ENCODE measurements at regions of chr4 and their contacts with region 1.

Region 1: GRCh38 chr4:173420324-173420752 is 21.4 kb upstream of the SCRG1 start:
- DNase-seq: no peak
- H3K4me3 ChIP-seq: no peak overlapping the region
- CTCF ChIP-seq: peak; percentile 12

Region 2: DNA sequence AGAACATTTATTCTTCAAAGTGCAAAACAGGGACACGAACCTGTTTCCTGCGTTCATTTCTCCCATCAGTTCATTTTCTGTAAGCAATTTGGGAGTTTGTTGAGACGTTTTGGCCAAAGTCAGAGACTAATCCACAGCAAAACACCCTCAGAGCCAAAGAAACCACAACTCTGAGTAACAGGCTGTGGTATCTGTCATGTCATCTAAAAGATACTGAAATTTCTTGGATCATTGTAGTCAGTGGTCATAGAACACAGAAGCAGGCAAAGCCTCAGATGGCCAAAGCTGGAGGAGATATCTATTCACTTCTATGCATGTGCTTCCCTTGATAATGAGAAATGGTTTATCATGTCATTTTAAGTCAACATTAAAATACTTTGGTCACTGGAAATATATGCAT is 737.3 kb before region 1 on chr4:
- CTCF ChIA-PET with region 1: no interaction called
- POLR2A ChIA-PET with region 1: no interaction called
- DNase-seq: peak; percentile 7
- H3K4me3 ChIP-seq: no peak overlapping the region
- CTCF ChIP-seq: no peak

Region 3: DNA sequence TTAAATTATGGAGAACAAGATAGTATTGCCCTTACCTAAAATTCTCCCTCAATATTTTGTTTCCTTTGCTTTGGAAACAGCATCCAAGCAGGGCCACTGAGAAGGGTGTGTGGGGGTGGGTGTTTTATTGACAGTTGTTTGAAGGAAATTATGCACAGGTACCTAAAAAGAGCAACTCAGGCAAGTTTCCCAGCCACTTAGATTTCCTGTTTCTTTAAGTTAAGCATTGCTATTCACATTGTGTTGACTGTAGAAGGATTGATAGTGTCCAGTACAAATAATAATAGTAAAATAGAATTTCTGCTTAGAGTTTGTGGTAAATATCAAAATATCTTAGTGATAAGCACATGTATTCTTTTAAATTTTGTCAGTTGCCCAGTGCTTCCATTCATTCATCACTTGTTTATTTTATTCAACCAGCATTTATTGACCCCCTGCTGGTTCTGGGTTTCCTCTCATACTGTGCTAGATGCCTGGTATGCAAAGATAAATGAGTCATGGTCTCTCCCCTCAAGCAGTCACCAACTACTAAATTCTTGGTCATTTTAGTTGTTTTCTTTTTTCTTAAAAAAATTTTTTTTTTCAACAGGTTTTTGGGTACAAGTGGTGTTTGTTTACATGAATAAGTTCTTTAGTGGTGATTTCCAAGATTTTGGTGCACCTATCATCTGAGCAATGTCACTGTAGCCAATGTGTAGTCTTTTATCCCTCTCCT is 201.8 kb before region 1 on chr4:
- CTCF ChIA-PET with region 1: no interaction called
- POLR2A ChIA-PET with region 1: no interaction called
- DNase-seq: peak; percentile 34
- H3K4me3 ChIP-seq: no peak overlapping the region
- CTCF ChIP-seq: no peak

Region 4: GRCh38 chr4:173307778-173308177 is 112.6 kb before region 1 on chr4:
- CTCF ChIA-PET with region 1: interaction called, 38 read pairs
- POLR2A ChIA-PET with region 1: no interaction called
- DNase-seq: no peak
- H3K4me3 ChIP-seq: no peak overlapping the region
- CTCF ChIP-seq: no peak

Region 5: DNA sequence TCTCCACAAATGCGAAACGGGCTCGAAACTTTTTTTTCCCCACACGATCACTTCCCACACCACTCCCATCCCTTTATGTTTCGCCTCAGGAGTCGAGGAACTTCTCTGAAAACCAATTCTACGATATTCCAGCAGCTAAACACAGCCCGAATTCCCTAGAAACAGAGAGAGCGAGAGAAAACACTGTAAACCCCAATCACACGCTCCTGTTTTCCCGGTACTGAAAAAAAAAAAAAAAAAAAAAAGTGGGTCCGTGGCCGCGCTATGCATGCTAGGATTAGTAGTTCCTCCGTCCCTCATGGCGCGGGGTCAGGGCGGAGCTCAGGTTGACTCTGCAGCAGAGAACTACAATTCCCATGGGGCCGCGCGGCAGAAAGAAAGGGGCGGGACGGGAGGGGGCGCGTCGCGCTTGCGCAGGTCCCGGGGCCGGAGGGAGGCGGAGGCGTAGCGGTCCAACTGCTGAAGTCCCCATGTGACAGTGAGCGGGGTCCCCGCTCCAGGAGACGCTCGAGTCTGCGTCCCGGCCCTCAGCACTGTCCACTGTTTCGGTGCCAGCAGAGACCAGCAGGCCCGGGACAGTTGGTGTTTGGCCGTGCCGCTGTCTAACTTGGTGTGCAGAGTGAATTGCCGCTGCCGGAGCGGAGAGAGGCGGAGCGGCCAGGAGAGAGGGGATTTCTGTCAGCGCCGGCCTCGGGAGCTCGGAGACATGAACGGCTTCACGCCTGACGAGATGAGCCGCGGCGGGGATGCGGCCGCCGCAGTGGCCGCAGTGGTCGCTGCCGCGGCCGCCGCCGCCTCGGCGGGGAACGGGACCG is 49.7 kb before region 1 on chr4 and contains the start of gene SAP30:
- CTCF ChIA-PET with region 1: interaction called, 11 read pairs
- POLR2A ChIA-PET with region 1: interaction called, 3 read pairs
- DNase-seq: peak; percentile 91
- H3K4me3 ChIP-seq: peak within 1 kb of the TSS; percentile 89
- CTCF ChIP-seq: no peak

Region 6: GRCh38 chr4:173405840-173406606 is 14.3 kb before region 1 on chr4:
- CTCF ChIA-PET with region 1: interaction called, 42 read pairs
- POLR2A ChIA-PET with region 1: no interaction called
- DNase-seq: no peak
- H3K4me3 ChIP-seq: no peak overlapping the region
- CTCF ChIP-seq: no peak

Region 7: GRCh38 chr4:173494013-173494970 is 74.0 kb after region 1 on chr4:
- CTCF ChIA-PET with region 1: interaction called, 198 read pairs
- POLR2A ChIA-PET with region 1: interaction called, 4 read pairs
- DNase-seq: no peak
- H3K4me3 ChIP-seq: peak overlapping the region; percentile 31
- CTCF ChIP-seq: peak; percentile 85

Region 8: DNA sequence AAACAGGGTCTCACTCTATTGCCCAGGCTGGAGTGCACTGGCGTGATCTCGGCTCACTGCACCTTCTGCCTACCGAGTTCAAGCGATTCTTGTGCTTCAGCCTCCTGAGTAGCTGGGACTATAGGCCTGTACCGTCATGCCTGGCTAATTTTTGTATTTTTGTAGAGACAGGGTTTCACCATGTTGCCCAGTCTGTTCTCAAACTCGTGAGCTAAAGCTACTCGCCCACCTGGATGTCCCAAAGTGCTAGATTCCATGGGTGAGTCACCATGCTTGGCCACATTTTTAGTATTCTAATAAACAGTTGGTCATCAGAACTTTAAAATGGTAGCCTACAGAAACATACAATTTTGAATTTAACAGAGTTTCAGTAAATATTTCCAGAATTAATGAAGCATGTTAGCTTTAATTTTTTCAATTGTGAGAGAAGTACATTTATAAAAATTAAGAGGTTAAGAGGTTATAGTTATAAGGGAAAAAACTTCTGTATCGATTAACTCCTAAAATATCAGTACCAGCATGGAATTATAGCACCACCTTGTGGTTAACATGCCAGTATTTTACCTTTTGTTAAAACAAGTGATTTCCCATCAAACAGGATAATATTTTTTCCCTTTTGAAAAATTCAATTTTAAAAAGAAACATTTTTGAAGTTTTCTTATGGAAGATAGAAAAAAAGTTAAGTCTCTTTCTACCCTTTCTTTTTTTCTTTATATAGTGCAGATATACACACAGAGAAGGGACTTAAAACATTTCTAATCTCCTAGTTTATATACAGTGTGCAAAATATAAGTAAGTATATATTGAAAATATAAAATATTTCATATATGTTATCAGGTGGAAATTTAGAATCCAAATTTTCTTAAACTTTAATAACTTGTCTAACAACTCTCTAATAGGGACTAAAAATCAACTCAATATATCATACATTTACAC is 898.8 kb after region 1 on chr4:
- CTCF ChIA-PET with region 1: interaction called, 11 read pairs
- POLR2A ChIA-PET with region 1: no interaction called
- DNase-seq: no peak
- H3K4me3 ChIP-seq: no peak overlapping the region
- CTCF ChIP-seq: peak; percentile 45